CD4-positive, alpha-beta memory T cell (primary cell): ENCODE measurements at regions of chr4 and their contacts with region 1.

Region 1: GRCh38 chr4:15882675-15883086 is 55.9 kb downstream of the FGFBP1 start:
- DNase-seq: peak in 4 of 5 donors; percentile 33 to 43 (median 38)
- H3K4me3 ChIP-seq: no peak overlapping the region
- H3K4me3 Mint-ChIP-seq: no peak overlapping the region
- H3K27ac ChIP-seq: no peak overlapping the region
- H3K27ac Mint-ChIP-seq: no peak overlapping the region
- H3K4me1 ChIP-seq: no peaks in the 10 kb centered on the region
- H3K4me1 Mint-ChIP-seq: no peaks in the 10 kb centered on the region
- H3K27me3 ChIP-seq: no peaks in the 10 kb centered on the region
- H3K27me3 Mint-ChIP-seq: peaks cover 7 to 10% of the 10 kb centered on the region in 2 donors

Region 2: DNA sequence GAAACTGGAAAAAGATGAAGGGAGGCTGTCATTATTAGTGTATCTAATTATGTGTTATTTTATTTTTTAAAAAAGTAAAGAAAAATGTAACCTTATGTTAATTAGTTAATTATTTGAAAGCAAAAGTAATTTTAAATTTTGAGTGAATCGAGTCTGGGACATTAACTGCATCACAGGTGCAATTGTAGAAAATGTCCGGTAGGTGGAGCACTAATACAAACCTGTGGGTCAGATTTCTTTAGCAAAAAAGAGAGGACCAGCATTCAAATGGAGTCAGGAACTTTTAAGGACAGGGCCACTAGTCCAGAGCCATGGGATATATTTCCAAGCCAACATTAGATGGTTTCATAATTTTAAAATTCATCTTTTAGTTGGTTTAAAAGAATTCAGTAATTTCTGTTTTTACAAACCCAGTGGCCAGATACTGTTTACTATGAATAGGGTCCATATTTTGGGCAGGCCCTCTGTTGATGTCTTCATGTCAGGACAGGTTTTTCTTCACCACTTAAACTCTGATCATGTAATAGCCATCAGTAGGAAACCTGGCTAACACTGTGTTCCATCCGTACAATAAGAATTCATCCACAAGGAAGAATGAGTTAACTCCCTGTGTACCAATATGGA is 152.7 kb before region 1 on chr4:
- CTCF ChIA-PET with region 1: interaction called, 7 read pairs
- POLR2A ChIA-PET with region 1: no interaction called
- intact Hi-C with region 1: loop called (anchors 1 kb)
- DNase-seq: peak in 4 of 5 donors; percentile 46 to 60 (median 54)
- H3K4me3 ChIP-seq: no peak overlapping the region
- H3K4me3 Mint-ChIP-seq: no peak overlapping the region
- H3K27ac ChIP-seq: no peak overlapping the region
- H3K27ac Mint-ChIP-seq: no peak overlapping the region
- H3K4me1 ChIP-seq: peaks cover 3% of the 10 kb centered on the region
- H3K4me1 Mint-ChIP-seq: peaks cover 4 to 11% (median 8%) of the 10 kb centered on the region in 4 donors
- H3K27me3 ChIP-seq: no peaks in the 10 kb centered on the region
- H3K27me3 Mint-ChIP-seq: peaks cover 1 to 2% of the 10 kb centered on the region in 2 donors

Region 3: GRCh38 chr4:15855804-15856475 is 26.7 kb before region 1 on chr4:
- CTCF ChIA-PET with region 1: interaction called, 10 read pairs
- POLR2A ChIA-PET with region 1: no interaction called
- intact Hi-C with region 1: no loop called
- DNase-seq: no peak
- H3K4me3 ChIP-seq: no peak overlapping the region
- H3K4me3 Mint-ChIP-seq: no peak overlapping the region
- H3K27ac ChIP-seq: no peak overlapping the region
- H3K27ac Mint-ChIP-seq: no peak overlapping the region
- H3K4me1 ChIP-seq: no peaks in the 10 kb centered on the region
- H3K4me1 Mint-ChIP-seq: no peaks in the 10 kb centered on the region
- H3K27me3 ChIP-seq: no peaks in the 10 kb centered on the region
- H3K27me3 Mint-ChIP-seq: peaks cover 1 to 3% of the 10 kb centered on the region in 2 donors

Region 4: DNA sequence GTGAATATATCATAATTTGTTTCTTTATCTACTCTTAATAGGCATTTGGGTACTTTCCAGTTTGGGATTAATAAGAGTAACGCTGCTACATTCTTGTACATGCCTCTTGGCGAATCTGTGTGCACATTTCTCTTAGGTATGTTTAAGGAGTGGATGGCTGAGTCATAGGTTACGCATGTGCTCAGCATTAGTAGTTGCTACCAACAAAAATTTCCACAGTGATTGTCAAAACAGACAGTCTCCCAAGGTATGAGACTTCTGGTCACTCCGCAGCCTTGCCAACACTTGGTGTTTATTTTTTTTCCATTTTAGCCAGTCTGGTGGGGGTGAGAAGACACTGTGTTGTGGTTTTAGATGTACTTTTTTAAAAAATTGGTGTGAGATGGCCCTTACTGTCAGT is 11.3 kb after region 1 on chr4:
- CTCF ChIA-PET with region 1: interaction called, 19 read pairs
- POLR2A ChIA-PET with region 1: no interaction called
- intact Hi-C with region 1: no loop called
- DNase-seq: no peak
- H3K4me3 ChIP-seq: no peak overlapping the region
- H3K4me3 Mint-ChIP-seq: no peak overlapping the region
- H3K27ac ChIP-seq: no peak overlapping the region
- H3K27ac Mint-ChIP-seq: no peak overlapping the region
- H3K4me1 ChIP-seq: no peaks in the 10 kb centered on the region
- H3K4me1 Mint-ChIP-seq: no peaks in the 10 kb centered on the region
- H3K27me3 ChIP-seq: peaks cover 4% of the 10 kb centered on the region
- H3K27me3 Mint-ChIP-seq: peaks cover 4 to 11% of the 10 kb centered on the region in 2 donors

Region 5: DNA sequence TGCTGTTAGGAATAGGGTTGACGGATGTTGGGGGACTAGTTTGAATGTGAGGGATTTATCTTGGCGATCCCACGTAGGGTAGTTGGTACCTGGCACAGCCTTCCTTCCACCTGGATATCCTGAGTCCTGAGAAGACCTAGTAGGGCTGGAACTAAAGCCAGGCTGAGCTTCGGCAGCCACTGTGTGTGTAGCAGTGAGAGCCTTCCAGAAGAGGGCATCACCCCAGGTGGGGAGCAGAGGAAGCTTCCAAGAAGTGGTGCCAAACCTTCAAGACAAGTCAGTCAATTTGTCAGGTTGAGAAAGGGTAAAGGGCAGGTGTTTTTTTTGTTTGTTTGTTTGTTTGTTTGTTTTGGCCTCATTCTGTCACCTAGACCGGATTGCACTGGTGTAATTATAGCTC is 81.5 kb after region 1 on chr4:
- CTCF ChIA-PET with region 1: no interaction called
- POLR2A ChIA-PET with region 1: no interaction called
- intact Hi-C with region 1: no loop called
- DNase-seq: no peak
- H3K4me3 ChIP-seq: no peak overlapping the region
- H3K4me3 Mint-ChIP-seq: no peak overlapping the region
- H3K27ac ChIP-seq: no peak overlapping the region
- H3K27ac Mint-ChIP-seq: no peak overlapping the region
- H3K4me1 ChIP-seq: no peaks in the 10 kb centered on the region
- H3K4me1 Mint-ChIP-seq: peaks cover 0 to 6% (median 5%) of the 10 kb centered on the region in 4 donors
- H3K27me3 ChIP-seq: no peaks in the 10 kb centered on the region
- H3K27me3 Mint-ChIP-seq: peaks cover 11 to 15% of the 10 kb centered on the region in 2 donors

Region 6: GRCh38 chr4:16001484-16001858 is 118.8 kb after region 1 on chr4:
- CTCF ChIA-PET with region 1: interaction called, 6 read pairs
- POLR2A ChIA-PET with region 1: no interaction called
- intact Hi-C with region 1: loop called (anchors 1 kb)
- DNase-seq: peak; percentile 31 to 43 (median 36)
- H3K4me3 ChIP-seq: no peak overlapping the region
- H3K4me3 Mint-ChIP-seq: no peak overlapping the region
- H3K27ac ChIP-seq: no peak overlapping the region
- H3K27ac Mint-ChIP-seq: no peak overlapping the region
- H3K4me1 ChIP-seq: no peaks in the 10 kb centered on the region
- H3K4me1 Mint-ChIP-seq: peaks cover 0 to 1% (median 0%) of the 10 kb centered on the region in 4 donors
- H3K27me3 ChIP-seq: no peaks in the 10 kb centered on the region
- H3K27me3 Mint-ChIP-seq: peaks cover 5 to 17% of the 10 kb centered on the region in 2 donors